ENCODE measurements at regions of chr1 and their contacts with region 1.

Region 1: DNA sequence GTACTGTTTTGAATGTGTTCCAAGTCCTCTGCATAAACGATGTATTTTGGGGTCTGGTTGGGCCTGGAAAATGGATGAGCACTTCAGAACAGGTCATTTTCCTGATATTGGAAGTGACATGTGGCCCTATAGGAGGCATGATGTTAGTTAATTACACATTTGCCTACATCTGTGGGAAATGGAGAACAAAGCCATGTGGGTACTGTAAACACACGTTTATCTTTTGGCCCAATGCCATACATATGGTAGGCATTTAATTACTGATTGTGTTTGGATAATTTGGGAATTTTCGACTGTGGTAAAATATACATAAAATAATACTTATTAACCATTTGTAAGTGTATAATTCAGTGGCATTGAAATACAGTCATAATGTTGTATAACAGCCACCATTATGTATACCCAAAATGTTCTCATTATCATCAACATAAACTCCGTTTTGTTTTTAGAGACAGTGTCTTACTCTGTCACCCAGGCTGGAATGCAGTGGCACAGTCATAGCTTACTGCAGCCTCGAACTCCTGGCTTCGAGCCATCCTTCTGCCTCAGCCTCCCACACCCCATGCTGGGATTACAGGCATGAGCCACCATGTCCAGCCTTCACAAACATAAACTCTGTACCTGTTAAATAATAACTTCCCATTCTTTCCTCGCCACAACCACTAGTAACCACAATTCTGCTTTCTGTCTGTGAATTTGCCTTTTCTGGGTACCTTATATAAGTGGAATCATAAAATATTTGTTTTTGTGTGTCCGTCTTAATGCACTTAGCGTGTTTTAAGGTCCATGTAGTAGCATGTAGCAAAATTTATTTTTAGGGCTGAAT is 11.9 kb upstream of the RNPEP start:
- DNase-seq: no peak
- ATAC-seq: no peak
- H3K4me3 ChIP-seq: no peak overlapping the region
- H3K27ac ChIP-seq: no peak overlapping the region
- H3K4me1 ChIP-seq: peaks cover 6% of the 10 kb centered on the region
- H3K27me3 ChIP-seq: no peaks in the 10 kb centered on the region
- CTCF ChIP-seq: no peak
- EP300 ChIP-seq: no peak
- POLR2A ChIP-seq: no peak
- RAD21 ChIP-seq: no peak

Region 2: DNA sequence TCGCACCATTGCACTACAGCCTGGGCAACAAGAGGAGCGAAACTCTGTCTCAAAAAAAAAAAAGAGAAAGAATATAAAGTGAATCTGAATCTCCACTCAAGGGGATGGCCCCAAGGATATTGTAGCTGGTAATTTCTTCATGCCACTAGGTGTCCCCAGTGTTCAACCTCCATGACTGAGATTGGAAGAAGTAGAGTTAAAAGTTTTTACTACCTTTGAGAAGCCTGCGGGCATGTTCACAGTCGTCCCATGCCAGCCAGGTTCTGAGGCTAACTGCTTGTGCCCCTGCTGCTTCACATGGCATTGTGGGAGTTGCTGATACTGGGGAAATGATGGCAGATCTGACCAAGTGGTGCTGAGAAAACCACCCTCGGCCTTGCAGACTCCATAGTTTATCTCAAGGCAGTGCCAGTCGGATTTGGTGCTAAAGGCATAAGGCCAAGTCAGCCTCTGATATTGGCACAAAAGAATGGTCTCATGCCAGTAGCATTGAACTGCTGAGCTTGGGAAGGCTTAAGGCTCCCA is 92.6 kb before region 1 on chr1:
- CTCF ChIA-PET with region 1: interaction called, 22 read pairs
- POLR2A ChIA-PET with region 1: no interaction called
- RAD21 ChIA-PET with region 1: interaction called, 6 read pairs
- SMC1A ChIA-PET with region 1: interaction called, 8 read pairs
- in situ Hi-C with region 1: no loop called
- intact Hi-C with region 1: loop called (anchors 1 kb)
- DNase-seq: no peak
- ATAC-seq: peak; percentile 86
- H3K4me3 ChIP-seq: no peak overlapping the region
- H3K27ac ChIP-seq: no peak overlapping the region
- H3K4me1 ChIP-seq: peaks cover 5% of the 10 kb centered on the region; the same call in 1 of the 2 replicates
- H3K27me3 ChIP-seq: no peaks in the 10 kb centered on the region
- CTCF ChIP-seq: peak; percentile 52 to 68 (median 57)
- EP300 ChIP-seq: no peak
- POLR2A ChIP-seq: peak; percentile 36; the same call in 1 of the 2 replicates
- RAD21 ChIP-seq: peak; percentile 52

Region 3: GRCh38 chr1:201885531-201886075 is 84.9 kb before region 1 on chr1:
- CTCF ChIA-PET with region 1: interaction called, 233 read pairs
- POLR2A ChIA-PET with region 1: no interaction called
- RAD21 ChIA-PET with region 1: interaction called, 6 read pairs
- SMC1A ChIA-PET with region 1: interaction called, 7 read pairs
- in situ Hi-C with region 1: loop called (anchors 5 kb)
- intact Hi-C with region 1: no loop called
- DNase-seq: no peak
- ATAC-seq: no peak
- H3K4me3 ChIP-seq: no peak overlapping the region
- H3K27ac ChIP-seq: no peak overlapping the region
- H3K4me1 ChIP-seq: peaks cover 5% of the 10 kb centered on the region; the same call in 1 of the 2 replicates
- H3K27me3 ChIP-seq: peaks cover 2 to 11% of the 10 kb centered on the region in 2 experiments; a peak in 3 of 4 replicates
- CTCF ChIP-seq: no peak
- EP300 ChIP-seq: no peak
- POLR2A ChIP-seq: no peak
- RAD21 ChIP-seq: no peak

Region 4: GRCh38 chr1:201955009-201955728 is 15.4 kb before region 1 on chr1 and contains the start of gene TIMM17A:
- CTCF ChIA-PET with region 1: interaction called, 17 read pairs
- POLR2A ChIA-PET with region 1: interaction called, 10 read pairs
- RAD21 ChIA-PET with region 1: no interaction called
- SMC1A ChIA-PET with region 1: interaction called, 7 read pairs
- in situ Hi-C with region 1: no loop called
- intact Hi-C with region 1: no loop called
- DNase-seq: peak; percentile 91
- ATAC-seq: peak; percentile 100
- H3K4me3 ChIP-seq: peak within 1 kb of the TSS; percentile 91
- H3K27ac ChIP-seq: peak within 1 kb of the TSS; percentile 91
- H3K4me1 ChIP-seq: no peaks in the 10 kb centered on the region; the same call in 1 of the 2 replicates
- H3K27me3 ChIP-seq: no peaks in the 10 kb centered on the region
- CTCF ChIP-seq: no peak
- EP300 ChIP-seq: peak in 1 of 2 experiments; percentile 47; a peak in 1 of 4 replicates
- POLR2A ChIP-seq: peak; percentile 99
- RAD21 ChIP-seq: no peak
- polyA plus RNA-seq, gene TIMM17A: 248 to 357 TPM

Region 5: DNA sequence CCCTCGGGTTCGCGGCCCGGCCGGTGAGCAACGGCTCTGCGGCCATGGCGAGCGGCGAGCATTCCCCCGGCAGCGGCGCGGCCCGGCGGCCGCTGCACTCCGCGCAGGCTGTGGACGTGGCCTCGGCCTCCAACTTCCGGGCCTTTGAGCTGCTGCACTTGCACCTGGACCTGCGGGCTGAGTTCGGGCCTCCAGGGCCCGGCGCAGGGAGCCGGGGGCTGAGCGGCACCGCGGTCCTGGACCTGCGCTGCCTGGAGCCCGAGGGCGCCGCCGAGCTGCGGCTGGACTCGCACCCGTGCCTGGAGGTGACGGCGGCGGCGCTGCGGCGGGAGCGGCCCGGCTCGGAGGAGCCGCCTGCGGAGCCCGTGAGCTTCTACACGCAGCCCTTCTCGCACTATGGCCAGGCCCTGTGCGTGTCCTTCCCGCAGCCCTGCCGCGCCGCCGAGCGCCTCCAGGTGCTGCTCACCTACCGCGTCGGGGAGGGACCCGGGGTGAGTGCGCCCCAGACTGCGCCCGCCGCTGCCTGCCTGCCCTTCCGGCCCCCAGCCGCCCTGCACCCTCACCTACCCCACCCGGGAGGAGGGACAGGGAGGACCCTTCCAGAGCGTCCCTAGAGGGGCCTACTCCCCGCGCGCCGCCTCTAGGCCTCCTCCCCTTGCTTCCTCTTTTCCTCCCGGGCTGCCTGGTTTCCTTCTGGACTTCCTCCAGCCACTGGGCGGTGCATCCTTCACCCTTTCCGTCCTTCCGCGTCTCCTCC is 12.3 kb after region 1 on chr1 and contains the start of gene RNPEP:
- CTCF ChIA-PET with region 1: interaction called, 18 read pairs
- POLR2A ChIA-PET with region 1: interaction called, 3 read pairs
- RAD21 ChIA-PET with region 1: no interaction called
- SMC1A ChIA-PET with region 1: interaction called, 7 read pairs
- in situ Hi-C with region 1: no loop called
- intact Hi-C with region 1: no loop called
- DNase-seq: no peak
- ATAC-seq: peak; percentile 88
- H3K4me3 ChIP-seq: peak within 1 kb of the TSS; percentile 82
- H3K27ac ChIP-seq: peak within 1 kb of the TSS; percentile 78
- H3K4me1 ChIP-seq: peaks cover 3% of the 10 kb centered on the region
- H3K27me3 ChIP-seq: 0 out of 4 replicates have a peak, but pooled peaks cover 0 to 2% of the 10 kb centered on the region in 2 experiments
- CTCF ChIP-seq: peak in 2 of 3 experiments; percentile 5 to 13; a peak in 2 of 6 replicates
- EP300 ChIP-seq: no peak
- POLR2A ChIP-seq: peak; percentile 80
- RAD21 ChIP-seq: no peak
- polyA plus RNA-seq, gene RNPEP: 18.3 to 21.6 TPM

Region 6: GRCh38 chr1:202056644-202057461 is 86.3 kb after region 1 on chr1:
- CTCF ChIA-PET with region 1: no interaction called
- POLR2A ChIA-PET with region 1: no interaction called
- RAD21 ChIA-PET with region 1: no interaction called
- SMC1A ChIA-PET with region 1: no interaction called
- in situ Hi-C with region 1: no loop called
- intact Hi-C with region 1: no loop called
- DNase-seq: no peak
- ATAC-seq: no peak; the same call in 2 of the 3 replicates
- H3K4me3 ChIP-seq: no peak overlapping the region
- H3K27ac ChIP-seq: no peak overlapping the region
- H3K4me1 ChIP-seq: no peaks in the 10 kb centered on the region
- H3K27me3 ChIP-seq: 0 out of 4 replicates have a peak, but pooled peaks cover 0 to 3% of the 10 kb centered on the region in 2 experiments
- CTCF ChIP-seq: no peak
- EP300 ChIP-seq: no peak
- POLR2A ChIP-seq: no peak
- RAD21 ChIP-seq: no peak

Region 7: DNA sequence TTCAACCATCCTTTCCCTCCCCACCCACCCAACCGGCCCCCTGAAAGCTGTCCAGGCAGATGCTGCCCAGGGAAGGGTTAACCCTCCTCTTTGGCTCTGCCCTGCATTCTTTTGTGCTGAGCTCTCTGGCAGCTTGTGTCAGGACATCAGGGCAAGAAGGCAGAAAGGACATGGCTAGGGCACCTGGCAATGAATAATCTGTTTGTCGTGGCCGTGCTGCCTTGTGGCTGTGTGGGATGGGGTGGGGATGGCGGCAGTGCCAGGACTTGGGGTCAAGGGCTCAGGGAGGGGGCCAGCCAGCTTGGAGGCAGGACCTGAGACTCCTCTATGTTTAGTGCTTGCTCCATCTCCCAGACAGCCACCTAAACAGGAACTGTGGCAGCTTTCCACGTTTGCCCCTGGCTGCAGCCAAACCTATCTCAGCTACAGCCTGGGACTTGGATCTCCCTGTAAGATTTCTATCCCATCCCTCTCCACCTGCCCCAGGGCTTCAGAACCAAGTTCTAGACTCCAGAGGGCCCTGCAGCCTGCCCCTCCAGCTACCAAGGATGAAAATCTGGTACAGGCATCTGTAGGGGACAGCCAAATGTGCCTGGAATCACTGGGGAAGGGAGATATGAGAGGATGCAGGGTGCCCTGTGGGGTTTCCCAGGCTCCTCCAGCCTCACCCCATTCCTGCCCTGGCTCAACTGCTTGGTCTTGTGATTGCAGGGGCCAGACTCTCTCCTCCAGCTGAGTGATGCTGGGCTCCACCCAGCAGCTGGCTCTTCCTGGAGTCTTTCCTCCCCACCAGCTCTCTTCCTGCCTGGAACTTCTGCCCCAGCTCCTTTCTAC is 142.5 kb after region 1 on chr1:
- CTCF ChIA-PET with region 1: interaction called, 23 read pairs
- POLR2A ChIA-PET with region 1: interaction called, 7 read pairs
- RAD21 ChIA-PET with region 1: no interaction called
- SMC1A ChIA-PET with region 1: no interaction called
- in situ Hi-C with region 1: no loop called
- intact Hi-C with region 1: no loop called
- DNase-seq: no peak
- ATAC-seq: peak; percentile 24
- H3K4me3 ChIP-seq: no peak overlapping the region
- H3K27ac ChIP-seq: no peak overlapping the region
- H3K4me1 ChIP-seq: peaks cover 14% of the 10 kb centered on the region
- H3K27me3 ChIP-seq: no peaks in the 10 kb centered on the region
- CTCF ChIP-seq: no peak
- EP300 ChIP-seq: no peak
- POLR2A ChIP-seq: no peak
- RAD21 ChIP-seq: no peak

Measured in GM12878 (cell line).